IMR-90 (cell line): ENCODE measurements at regions of chr20 and their contacts with region 1.

Region 1: GRCh38 chr20:16749573-16749972 is 1.4 kb downstream of the OTOR start:
- DNase-seq: no peak
- ATAC-seq: no peak
- H3K4me3 ChIP-seq: no peak overlapping the region
- H3K27ac ChIP-seq: no peak overlapping the region
- H3K4me1 ChIP-seq: peaks cover 4% of the 10 kb centered on the region; the same call in 1 of the 2 replicates
- H3K27me3 ChIP-seq: peaks cover 6% of the 10 kb centered on the region
- CTCF ChIP-seq: no peak
- POLR2A ChIP-seq: no peak
- RAD21 ChIP-seq: no peak

Region 2: DNA sequence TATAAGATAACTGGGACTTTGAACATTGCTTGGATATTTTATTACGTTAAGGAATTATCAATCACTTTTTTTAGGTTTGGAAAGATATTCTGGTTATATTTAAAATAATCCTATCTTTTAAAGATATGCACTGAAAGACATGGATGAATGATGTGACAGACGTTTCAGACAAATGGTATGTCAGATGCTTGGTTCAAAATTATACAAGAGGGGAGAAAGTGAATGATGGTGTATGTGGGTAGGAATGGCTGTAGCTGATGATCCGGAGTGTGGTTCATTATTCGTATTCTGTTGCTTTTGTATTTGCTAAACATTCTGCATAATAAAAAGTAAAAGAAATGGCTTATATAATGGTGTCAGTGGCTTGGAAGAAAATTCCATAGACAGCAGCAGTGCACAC is 70.8 kb before region 1 on chr20:
- CTCF ChIA-PET with region 1: no interaction called
- POLR2A ChIA-PET with region 1: no interaction called
- dilution Hi-C with region 1: no loop called
- in situ Hi-C with region 1: no loop called
- intact Hi-C with region 1: loop called (anchors 2 kb)
- DNase-seq: no peak
- ATAC-seq: no peak
- H3K4me3 ChIP-seq: no peak overlapping the region
- H3K27ac ChIP-seq: no peak overlapping the region
- H3K4me1 ChIP-seq: no peaks in the 10 kb centered on the region
- H3K27me3 ChIP-seq: no peaks in the 10 kb centered on the region
- CTCF ChIP-seq: no peak
- POLR2A ChIP-seq: no peak
- RAD21 ChIP-seq: no peak